Activated T-helper 2 cell treated with anti-CD3 and anti-CD28 coated beads, Interferon-gamma antibody, Interleukin-2, Interleukin-4, amounts not matched to agents 10 μg/mL and 5 μg/mL and 100 μg/mL, durations not matched to agents 14 hours and 24 hours and 36 hours (primary cell): ENCODE measurements at regions of chr7 and their contacts with region 1.

Region 1: DNA sequence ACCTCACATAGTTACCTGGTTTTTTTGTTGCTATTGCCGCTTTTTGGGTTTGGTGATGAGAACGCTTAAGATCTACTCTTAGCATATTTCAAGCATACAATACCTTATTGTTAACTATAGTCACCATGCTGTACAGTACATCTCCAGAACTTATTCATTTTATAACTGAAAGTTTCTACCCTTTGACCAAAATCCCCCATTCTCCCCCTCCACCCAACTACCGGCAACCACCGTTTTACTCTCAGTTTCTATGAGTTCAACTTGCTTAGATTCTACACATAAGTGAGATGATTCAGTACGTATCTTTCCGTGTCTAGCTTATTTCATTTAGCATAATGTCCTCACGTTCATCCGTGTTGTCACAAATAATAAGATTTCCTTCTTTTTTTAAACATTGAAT is 86.7 kb upstream of the IL6 start:
- DNase-seq: peak; percentile 32
- H3K4me3 Mint-ChIP-seq: no peak overlapping the region
- H3K27ac Mint-ChIP-seq: no peak overlapping the region
- H3K4me1 Mint-ChIP-seq: peaks cover 19% of the 10 kb centered on the region
- H3K27me3 Mint-ChIP-seq: peaks cover 24% of the 10 kb centered on the region

Region 2: GRCh38 chr7:22559829-22560489 is 80.3 kb before region 1 on chr7:
- intact Hi-C with region 1: loop called (anchors 1 kb)
- DNase-seq: peak; percentile 62
- H3K4me3 Mint-ChIP-seq: no peak overlapping the region
- H3K27ac Mint-ChIP-seq: no peak overlapping the region
- H3K4me1 Mint-ChIP-seq: peaks cover 44% of the 10 kb centered on the region
- H3K27me3 Mint-ChIP-seq: peaks cover 18% of the 10 kb centered on the region

Region 3: DNA sequence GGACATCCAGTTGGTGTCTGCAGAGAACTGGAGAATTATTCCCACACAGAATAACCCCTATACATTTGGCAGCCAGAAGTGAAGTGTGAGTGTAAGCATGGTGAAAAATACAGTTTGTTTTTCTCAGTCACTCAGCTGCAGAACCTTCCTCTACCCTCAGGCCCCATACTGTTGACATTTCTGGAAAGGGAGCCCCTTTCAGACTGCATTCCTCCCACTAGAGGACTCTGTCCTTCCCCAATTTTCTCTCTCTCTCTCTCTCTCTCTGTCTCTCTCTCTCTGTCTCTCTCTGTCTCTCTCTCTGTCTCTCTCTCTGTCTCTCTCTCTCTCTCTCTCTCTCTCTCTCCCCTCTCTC is 53.5 kb before region 1 on chr7:
- intact Hi-C with region 1: loop called (anchors 1 kb)
- DNase-seq: no peak
- H3K4me3 Mint-ChIP-seq: no peak overlapping the region
- H3K27ac Mint-ChIP-seq: no peak overlapping the region
- H3K4me1 Mint-ChIP-seq: peaks cover 18% of the 10 kb centered on the region
- H3K27me3 Mint-ChIP-seq: peaks cover 61% of the 10 kb centered on the region

Region 4: DNA sequence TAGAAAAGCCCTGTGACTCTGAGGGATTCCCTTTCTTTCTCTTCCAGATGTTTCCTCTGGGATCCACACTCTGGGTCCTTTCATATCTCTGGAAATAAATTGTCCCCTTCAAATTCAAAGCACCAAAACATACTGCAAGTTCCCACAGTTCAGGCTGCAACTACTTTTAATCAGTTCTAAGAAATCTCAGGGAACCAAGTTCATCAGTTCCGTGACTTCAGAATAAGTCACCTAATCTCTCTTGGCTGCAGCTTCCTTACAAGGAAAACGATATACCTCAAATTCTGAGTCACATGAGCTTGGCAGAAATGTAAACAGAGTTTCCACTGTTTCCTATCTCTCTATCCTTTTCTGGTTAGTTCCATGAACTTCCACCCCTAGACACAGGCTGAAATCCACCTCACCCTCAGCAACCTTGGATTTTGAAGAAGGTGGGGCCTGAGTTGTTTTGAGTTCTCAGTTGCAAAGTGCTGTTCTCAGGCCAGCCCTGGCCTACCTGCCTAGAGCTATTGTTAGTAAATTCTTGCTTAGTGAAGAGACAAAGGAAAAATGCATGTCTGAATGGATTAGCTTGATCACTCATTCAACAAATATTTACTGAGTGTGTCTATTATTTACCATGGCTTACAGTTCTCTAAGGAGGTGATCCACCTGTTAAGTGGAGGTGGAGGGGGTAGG is 27.4 kb after region 1 on chr7:
- intact Hi-C with region 1: loop called (anchors 1 kb)
- DNase-seq: no peak
- H3K4me3 Mint-ChIP-seq: no peak overlapping the region
- H3K27ac Mint-ChIP-seq: peak overlapping the region; percentile 59
- H3K4me1 Mint-ChIP-seq: peaks cover 68% of the 10 kb centered on the region
- H3K27me3 Mint-ChIP-seq: peaks cover 9% of the 10 kb centered on the region

Region 5: GRCh38 chr7:22675917-22676343 is 35.7 kb after region 1 on chr7:
- intact Hi-C with region 1: loop called (anchors 1 kb)
- DNase-seq: peak; percentile 63
- H3K4me3 Mint-ChIP-seq: no peak overlapping the region
- H3K27ac Mint-ChIP-seq: peak overlapping the region; percentile 54
- H3K4me1 Mint-ChIP-seq: peaks cover 84% of the 10 kb centered on the region
- H3K27me3 Mint-ChIP-seq: peaks cover 2% of the 10 kb centered on the region

Region 6: DNA sequence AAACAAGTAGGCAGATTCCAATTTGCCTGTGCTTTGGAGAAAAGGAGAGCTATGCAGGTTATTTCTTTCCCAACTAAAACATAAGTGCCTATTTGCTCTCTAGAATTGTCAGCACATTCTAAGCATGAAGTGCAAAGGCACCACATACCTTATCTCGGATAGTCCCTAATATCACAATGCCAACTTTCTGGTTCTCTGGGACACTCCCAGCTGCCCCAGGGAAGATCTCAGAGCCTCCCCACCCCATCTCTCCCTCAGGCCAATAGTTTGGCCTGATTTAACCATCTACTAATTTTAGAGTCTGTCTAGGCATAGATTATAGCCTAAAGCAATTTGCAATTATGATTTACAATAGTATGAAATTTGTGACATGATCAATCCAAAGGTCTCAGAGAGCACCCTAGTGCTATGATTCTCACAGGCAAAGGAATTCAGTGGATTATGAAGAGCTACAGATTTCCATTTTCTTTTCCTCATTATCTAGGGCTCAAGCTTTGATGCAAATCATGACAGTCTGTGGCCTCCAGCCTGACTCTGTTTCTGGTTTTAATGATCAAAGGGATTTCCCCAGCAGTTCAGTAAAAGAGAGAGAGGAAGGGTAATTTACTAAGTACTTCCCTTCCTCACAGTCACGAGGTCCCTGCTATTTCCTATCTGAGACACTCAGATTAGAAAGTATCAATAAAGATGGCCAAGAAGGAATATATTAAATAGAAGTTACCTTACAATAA is 57.8 kb after region 1 on chr7:
- intact Hi-C with region 1: loop called (anchors 2 kb)
- DNase-seq: no peak
- H3K4me3 Mint-ChIP-seq: no peak overlapping the region
- H3K27ac Mint-ChIP-seq: peak overlapping the region; percentile 56
- H3K4me1 Mint-ChIP-seq: peaks cover 78% of the 10 kb centered on the region
- H3K27me3 Mint-ChIP-seq: peaks cover 7% of the 10 kb centered on the region